ENCODE measurements at regions of chr3 and their contacts with region 1.

Region 1: DNA sequence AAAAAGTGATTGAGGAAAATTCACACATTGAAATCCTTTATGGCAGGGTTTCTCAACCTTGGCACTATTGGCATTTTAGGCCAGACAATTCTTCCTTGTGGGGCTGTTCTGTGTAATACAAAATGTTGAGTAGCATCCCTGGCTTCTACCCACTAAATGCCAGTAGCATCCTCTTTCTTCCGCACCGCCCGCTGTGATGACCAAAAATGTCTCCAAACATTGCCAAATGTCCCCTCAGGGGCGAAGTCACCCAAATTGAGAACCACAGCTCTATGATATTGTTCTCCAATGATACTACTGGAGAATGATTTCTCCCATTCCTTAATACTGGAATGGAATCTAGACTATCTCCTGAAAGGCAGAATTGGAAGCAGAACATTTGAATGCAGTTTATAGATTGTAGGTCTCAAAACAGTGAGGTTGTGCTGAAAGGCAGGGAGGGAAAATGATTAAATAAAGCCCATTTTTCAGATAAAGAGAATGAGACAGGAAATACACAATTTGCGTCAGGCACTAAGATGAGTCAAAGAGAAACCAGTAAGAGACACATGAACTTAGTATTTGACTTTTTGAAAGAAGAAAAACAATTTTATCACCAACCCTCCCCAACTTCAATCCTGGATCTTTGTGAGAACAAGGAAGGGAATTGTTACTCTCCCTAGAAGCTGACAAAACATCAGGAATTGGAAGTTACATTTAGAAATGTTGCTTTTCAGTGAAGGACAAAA is 101.6 kb upstream of the TNIK start:
- DNase-seq: no peak
- H3K4me3 Mint-ChIP-seq: peak overlapping the region; percentile 36
- H3K27ac Mint-ChIP-seq: peak overlapping the region; percentile 93
- H3K4me1 Mint-ChIP-seq: peaks cover 26% of the 10 kb centered on the region
- H3K27me3 Mint-ChIP-seq: no peaks in the 10 kb centered on the region

Region 2: GRCh38 chr3:170848292-170848917 is 713.4 kb before region 1 on chr3:
- CTCF ChIA-PET with region 1: no interaction called
- POLR2A ChIA-PET with region 1: no interaction called
- intact Hi-C with region 1: no loop called
- DNase-seq: no peak
- H3K4me3 Mint-ChIP-seq: no peak overlapping the region
- H3K27ac Mint-ChIP-seq: no peak overlapping the region
- H3K4me1 Mint-ChIP-seq: no peaks in the 10 kb centered on the region
- H3K27me3 Mint-ChIP-seq: peaks cover 16% of the 10 kb centered on the region

Region 3: GRCh38 chr3:171162986-171163723 is 398.6 kb before region 1 on chr3:
- CTCF ChIA-PET with region 1: interaction called, 55 read pairs
- POLR2A ChIA-PET with region 1: no interaction called
- intact Hi-C with region 1: loop called (anchors 1 kb)
- DNase-seq: no peak
- H3K4me3 Mint-ChIP-seq: no peak overlapping the region
- H3K27ac Mint-ChIP-seq: no peak overlapping the region
- H3K4me1 Mint-ChIP-seq: peaks cover 24% of the 10 kb centered on the region
- H3K27me3 Mint-ChIP-seq: no peaks in the 10 kb centered on the region

Region 4: DNA sequence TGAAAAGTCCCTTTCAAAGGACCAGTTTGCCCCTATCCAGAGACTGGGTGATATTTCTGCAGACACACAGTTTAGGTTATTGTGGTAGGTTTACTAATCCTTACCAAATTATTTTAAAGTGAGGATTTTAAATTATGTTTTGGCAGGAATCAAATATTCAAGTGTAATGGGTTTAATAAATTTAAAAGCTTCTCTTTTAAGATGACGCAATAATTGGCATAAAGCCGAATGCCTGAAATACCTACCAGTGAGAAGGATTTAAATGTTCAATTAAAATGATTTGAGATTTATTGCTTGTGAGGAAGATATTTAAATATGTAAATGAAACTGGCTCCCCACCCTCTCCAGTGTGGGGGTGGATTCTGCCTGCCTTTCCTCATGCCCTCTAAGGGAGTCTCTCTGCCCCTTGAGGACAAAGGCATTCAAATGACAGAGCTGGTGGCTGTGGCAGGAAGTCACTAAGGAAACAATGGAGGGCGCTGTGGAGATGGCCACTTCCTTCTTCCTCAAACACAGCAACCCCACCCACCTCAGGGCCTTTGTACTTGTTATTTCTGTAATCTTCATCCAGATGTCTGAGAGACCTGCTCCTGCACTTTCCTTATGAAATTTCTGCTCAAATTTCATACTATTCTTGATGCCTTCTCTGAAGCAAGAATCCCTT is 233.2 kb before region 1 on chr3:
- CTCF ChIA-PET with region 1: interaction called, 3 read pairs
- POLR2A ChIA-PET with region 1: no interaction called
- intact Hi-C with region 1: loop called (anchors 2 kb)
- DNase-seq: peak; percentile 62
- H3K4me3 Mint-ChIP-seq: no peak overlapping the region
- H3K27ac Mint-ChIP-seq: no peak overlapping the region
- H3K4me1 Mint-ChIP-seq: peaks cover 46% of the 10 kb centered on the region
- H3K27me3 Mint-ChIP-seq: no peaks in the 10 kb centered on the region

Region 5: DNA sequence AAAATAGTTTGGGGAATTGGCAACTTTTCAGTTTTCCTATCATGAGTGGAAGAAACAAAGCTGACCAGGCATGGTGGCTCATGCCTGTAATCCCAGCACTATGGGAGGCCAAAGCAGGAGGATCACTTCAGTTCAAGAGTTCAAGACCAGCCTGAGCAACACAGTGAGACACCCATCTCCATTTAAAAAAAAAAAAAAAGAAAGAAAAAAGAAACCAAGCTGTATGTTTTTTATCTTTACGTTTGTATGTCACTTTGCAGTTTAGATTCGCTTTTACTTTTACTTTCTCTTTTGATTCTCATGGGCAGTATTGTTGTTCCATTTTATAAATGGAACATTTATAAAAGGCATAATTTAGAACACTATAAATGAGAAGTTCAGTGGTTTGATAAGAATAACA is 70.4 kb before region 1 on chr3:
- CTCF ChIA-PET with region 1: interaction called, 5 read pairs
- POLR2A ChIA-PET with region 1: no interaction called
- intact Hi-C with region 1: loop called (anchors 5 kb)
- DNase-seq: no peak
- H3K4me3 Mint-ChIP-seq: peak overlapping the region; percentile 55
- H3K27ac Mint-ChIP-seq: peak overlapping the region; percentile 57
- H3K4me1 Mint-ChIP-seq: peaks cover 38% of the 10 kb centered on the region
- H3K27me3 Mint-ChIP-seq: no peaks in the 10 kb centered on the region